Spleen (tissue), 13 donors: ENCODE measurements at regions of chr1 and their contacts with region 1.

Region 1: DNA sequence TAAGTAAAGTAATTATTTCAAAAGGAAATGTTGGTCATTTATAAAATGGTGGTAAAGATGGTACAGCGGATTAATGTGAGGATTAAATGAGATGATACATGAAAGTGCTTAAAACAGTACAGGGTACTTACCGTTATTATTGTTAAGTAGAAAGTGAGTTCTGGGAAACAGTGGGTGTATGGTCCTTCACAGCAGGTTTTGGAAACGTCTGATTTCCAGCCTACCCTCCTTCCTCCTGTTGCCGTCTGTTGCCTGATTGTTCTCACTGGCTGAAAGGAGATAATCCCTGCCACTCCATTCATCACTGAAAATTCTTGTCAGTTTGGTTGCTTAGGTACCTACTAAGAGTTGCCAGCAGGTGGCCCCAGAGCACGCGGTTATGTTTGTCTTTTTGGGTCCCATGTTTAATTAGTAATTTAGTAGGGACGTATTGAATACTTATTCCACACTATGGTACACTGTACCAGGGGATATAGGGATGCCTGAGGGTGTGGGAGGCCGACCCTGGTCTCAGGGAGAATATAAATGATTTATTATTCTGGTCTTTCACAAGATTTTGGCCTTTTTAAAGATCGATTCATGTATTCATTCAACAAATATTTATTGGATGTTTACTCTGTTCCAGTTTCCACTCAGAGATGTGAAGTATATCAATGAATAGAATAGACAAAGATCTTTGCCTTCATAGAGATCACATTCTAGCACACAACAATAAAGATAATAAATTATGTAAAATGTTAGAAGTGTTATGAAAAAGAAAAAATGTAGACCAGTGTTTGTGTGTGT is 30.8 kb upstream of the RPTN start:
- DNase-seq: peak; percentile 81
- H3K4me3 ChIP-seq: peak overlapping the region in 7 of 8 donors; percentile 43 to 72 (median 47)
- H3K27ac ChIP-seq: peak overlapping the region in 1 of 8 donors; percentile 41
- H3K4me1 ChIP-seq: peaks cover 0 to 27% (median 10%) of the 10 kb centered on the region in 6 donors
- H3K27me3 ChIP-seq: peaks cover 0 to 9% (median 5%) of the 10 kb centered on the region in 7 donors
- CTCF ChIP-seq: peak; percentile 43 to 81 (median 74)
- POLR2A ChIP-seq: no peak

Region 2: GRCh38 chr1:152052606-152053005 is 137.2 kb before region 1 on chr1:
- intact Hi-C with region 1: loop called (anchors 2 kb)
- DNase-seq: peak; percentile 93
- H3K4me3 ChIP-seq: no peak overlapping the region
- H3K27ac ChIP-seq: no peak overlapping the region
- H3K4me1 ChIP-seq: peaks cover 2 to 46% (median 16%) of the 10 kb centered on the region in 6 donors
- H3K27me3 ChIP-seq: peaks cover 0 to 40% (median 4%) of the 10 kb centered on the region in 7 donors
- CTCF ChIP-seq: peak; percentile 88 to 96 (median 92)
- POLR2A ChIP-seq: no peak

Region 3: GRCh38 chr1:152141974-152142584 is 47.8 kb before region 1 on chr1:
- intact Hi-C with region 1: loop called (anchors 2 kb)
- DNase-seq: no peak
- H3K4me3 ChIP-seq: no peak overlapping the region
- H3K27ac ChIP-seq: no peak overlapping the region
- H3K4me1 ChIP-seq: no peaks in the 10 kb centered on the region
- H3K27me3 ChIP-seq: peaks cover 0 to 25% (median 0%) of the 10 kb centered on the region in 7 donors
- CTCF ChIP-seq: peak; percentile 24 to 76 (median 60)
- POLR2A ChIP-seq: no peak

Region 4: GRCh38 chr1:152459596-152460528 is 270.0 kb after region 1 on chr1:
- intact Hi-C with region 1: loop called (anchors 2 kb)
- DNase-seq: peak; percentile 89
- H3K4me3 ChIP-seq: peak overlapping the region in 2 of 8 donors; percentile 9 to 41
- H3K27ac ChIP-seq: peak overlapping the region; percentile 48 to 83 (median 79)
- H3K4me1 ChIP-seq: peaks cover 0 to 26% (median 13%) of the 10 kb centered on the region in 6 donors
- H3K27me3 ChIP-seq: no peaks in the 10 kb centered on the region
- CTCF ChIP-seq: peak; percentile 41 to 84 (median 69)
- POLR2A ChIP-seq: no peak